Transverse colon (tissue), 4 donors: ENCODE measurements at regions of chr15 and their contacts with region 1.

Region 1: GRCh38 chr15:78308422-78309032 is 9.1 kb upstream of the SKIC8 start:
- DNase-seq: peak; percentile 81
- H3K4me3 ChIP-seq: no peak overlapping the region
- H3K27ac ChIP-seq: no peak overlapping the region
- H3K4me1 ChIP-seq: peaks cover 0 to 9% (median 0%) of the 10 kb centered on the region in 4 donors
- H3K27me3 ChIP-seq: peaks cover 15% of the 10 kb centered on the region
- CTCF ChIP-seq: peak; percentile 74 to 92 (median 86)
- EP300 ChIP-seq: no peak
- POLR2A ChIP-seq: no peak

Region 2: GRCh38 chr15:78374436-78375393 is 66.2 kb after region 1 on chr15:
- in situ Hi-C with region 1: no loop called
- intact Hi-C with region 1: no loop called
- DNase-seq: peak; percentile 88
- H3K4me3 ChIP-seq: no peak overlapping the region
- H3K27ac ChIP-seq: peak overlapping the region; percentile 85 to 91 (median 88)
- H3K4me1 ChIP-seq: peaks cover 5 to 37% (median 13%) of the 10 kb centered on the region in 4 donors
- H3K27me3 ChIP-seq: no peaks in the 10 kb centered on the region
- CTCF ChIP-seq: no peak
- EP300 ChIP-seq: peak; percentile 46
- POLR2A ChIP-seq: peak; percentile 68

Region 3: GRCh38 chr15:78422571-78423340 is 114.2 kb after region 1 on chr15:
- in situ Hi-C with region 1: loop called (anchors 10 kb)
- intact Hi-C with region 1: loop called (anchors 2 kb)
- DNase-seq: peak; percentile 78
- H3K4me3 ChIP-seq: no peak overlapping the region
- H3K27ac ChIP-seq: peak overlapping the region; percentile 43 to 75 (median 56)
- H3K4me1 ChIP-seq: peaks cover 5 to 36% (median 17%) of the 10 kb centered on the region in 4 donors
- H3K27me3 ChIP-seq: no peaks in the 10 kb centered on the region
- CTCF ChIP-seq: peak; percentile 89 to 98 (median 94)
- EP300 ChIP-seq: no peak
- POLR2A ChIP-seq: no peak

Region 4: DNA sequence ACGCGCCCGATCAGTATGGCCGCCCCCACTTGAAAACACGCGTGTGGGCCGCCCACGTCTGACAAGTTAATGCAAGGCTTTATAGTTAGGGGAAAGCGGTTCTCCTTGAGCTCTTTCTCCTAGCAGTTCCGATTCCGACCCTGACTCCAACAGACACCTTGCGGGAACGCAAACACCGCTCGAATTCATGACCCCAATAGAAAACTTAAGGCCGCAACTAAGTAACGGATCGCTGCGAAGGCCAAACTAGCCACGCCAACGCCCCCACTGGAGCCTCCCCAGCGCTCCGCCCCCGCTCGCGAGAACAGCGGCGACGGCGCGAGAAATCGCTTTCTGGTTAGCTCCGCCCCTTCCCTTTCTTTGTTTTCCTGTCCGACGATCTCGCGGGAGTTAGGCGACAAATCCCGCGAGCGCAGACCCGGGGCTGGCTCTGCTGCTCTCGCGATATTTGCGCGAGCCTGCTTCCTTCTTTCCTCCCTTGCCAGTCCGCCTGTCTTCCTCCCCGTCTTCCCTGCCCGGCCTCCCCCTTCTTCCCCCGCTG is 129.3 kb after region 1 on chr15 and contains the start of gene IREB2:
- in situ Hi-C with region 1: no loop called
- intact Hi-C with region 1: loop called (anchors 5 kb)
- DNase-seq: peak; percentile 98
- H3K4me3 ChIP-seq: peak within 1 kb of the TSS; percentile 75 to 99 (median 91)
- H3K27ac ChIP-seq: peak within 1 kb of the TSS; percentile 91 to 100 (median 97)
- H3K4me1 ChIP-seq: peaks cover 16 to 55% (median 31%) of the 10 kb centered on the region in 4 donors
- H3K27me3 ChIP-seq: no peaks in the 10 kb centered on the region
- CTCF ChIP-seq: no peak
- EP300 ChIP-seq: no peak
- POLR2A ChIP-seq: peak; percentile 76
- total RNA-seq, gene IREB2: 20.1 to 71.7 (median 40.7) TPM

Region 5: GRCh38 chr15:78481917-78482316 is 173.4 kb after region 1 on chr15:
- in situ Hi-C with region 1: no loop called
- intact Hi-C with region 1: loop called (anchors 5 kb)
- DNase-seq: no peak
- H3K4me3 ChIP-seq: no peak overlapping the region
- H3K27ac ChIP-seq: no peak overlapping the region
- H3K4me1 ChIP-seq: no peaks in the 10 kb centered on the region
- H3K27me3 ChIP-seq: no peaks in the 10 kb centered on the region
- CTCF ChIP-seq: no peak
- EP300 ChIP-seq: no peak
- POLR2A ChIP-seq: no peak